OCI-LY7 (cell line): ENCODE measurements at regions of chr10 and their contacts with region 1.

Region 1: DNA sequence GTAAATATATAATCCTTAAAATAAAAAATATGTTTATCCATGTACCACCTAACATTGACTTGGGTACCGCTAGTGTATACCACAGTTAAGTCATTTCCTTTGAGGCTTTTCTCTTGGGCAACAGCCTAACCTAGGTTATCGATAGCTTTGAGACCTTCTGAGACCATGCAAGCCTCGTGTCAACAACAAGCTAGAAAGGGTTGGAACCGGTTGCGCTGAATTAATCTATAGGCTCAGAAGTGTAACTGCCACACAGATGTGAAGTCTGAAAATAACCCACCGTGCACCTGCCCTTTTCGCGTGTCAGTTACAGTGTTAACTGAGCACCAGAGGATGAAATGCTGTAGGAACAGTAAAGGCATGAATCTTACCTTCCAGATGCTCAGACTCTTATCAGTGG is 59.8 kb downstream of the ARID5B start:
- DNase-seq: peak; percentile 99
- H3K4me3 ChIP-seq: no peak overlapping the region
- H3K27ac ChIP-seq: peak overlapping the region; percentile 97
- H3K4me1 ChIP-seq: peaks cover 98% of the 10 kb centered on the region
- CTCF ChIP-seq: no peak

Region 2: GRCh38 chr10:61896854-61897661 is 64.2 kb before region 1 on chr10:
- CTCF ChIA-PET with region 1: interaction called, 4 read pairs
- POLR2A ChIA-PET with region 1: interaction called, 284 read pairs
- intact Hi-C with region 1: loop called (anchors 1 kb)
- DNase-seq: peak; percentile 95
- H3K4me3 ChIP-seq: peak overlapping the region; percentile 93
- H3K27ac ChIP-seq: peak overlapping the region; percentile 96
- H3K4me1 ChIP-seq: peaks cover 36% of the 10 kb centered on the region
- CTCF ChIP-seq: peak; percentile 83

Region 3: GRCh38 chr10:61943674-61944410 is 17.4 kb before region 1 on chr10:
- CTCF ChIA-PET with region 1: interaction called, 3 read pairs
- POLR2A ChIA-PET with region 1: interaction called, 10 read pairs
- intact Hi-C with region 1: loop called (anchors 2 kb)
- DNase-seq: peak; percentile 68
- H3K4me3 ChIP-seq: peak overlapping the region; percentile 30
- H3K27ac ChIP-seq: peak overlapping the region; percentile 88
- H3K4me1 ChIP-seq: peaks cover 67% of the 10 kb centered on the region
- CTCF ChIP-seq: peak; percentile 69

Region 4: DNA sequence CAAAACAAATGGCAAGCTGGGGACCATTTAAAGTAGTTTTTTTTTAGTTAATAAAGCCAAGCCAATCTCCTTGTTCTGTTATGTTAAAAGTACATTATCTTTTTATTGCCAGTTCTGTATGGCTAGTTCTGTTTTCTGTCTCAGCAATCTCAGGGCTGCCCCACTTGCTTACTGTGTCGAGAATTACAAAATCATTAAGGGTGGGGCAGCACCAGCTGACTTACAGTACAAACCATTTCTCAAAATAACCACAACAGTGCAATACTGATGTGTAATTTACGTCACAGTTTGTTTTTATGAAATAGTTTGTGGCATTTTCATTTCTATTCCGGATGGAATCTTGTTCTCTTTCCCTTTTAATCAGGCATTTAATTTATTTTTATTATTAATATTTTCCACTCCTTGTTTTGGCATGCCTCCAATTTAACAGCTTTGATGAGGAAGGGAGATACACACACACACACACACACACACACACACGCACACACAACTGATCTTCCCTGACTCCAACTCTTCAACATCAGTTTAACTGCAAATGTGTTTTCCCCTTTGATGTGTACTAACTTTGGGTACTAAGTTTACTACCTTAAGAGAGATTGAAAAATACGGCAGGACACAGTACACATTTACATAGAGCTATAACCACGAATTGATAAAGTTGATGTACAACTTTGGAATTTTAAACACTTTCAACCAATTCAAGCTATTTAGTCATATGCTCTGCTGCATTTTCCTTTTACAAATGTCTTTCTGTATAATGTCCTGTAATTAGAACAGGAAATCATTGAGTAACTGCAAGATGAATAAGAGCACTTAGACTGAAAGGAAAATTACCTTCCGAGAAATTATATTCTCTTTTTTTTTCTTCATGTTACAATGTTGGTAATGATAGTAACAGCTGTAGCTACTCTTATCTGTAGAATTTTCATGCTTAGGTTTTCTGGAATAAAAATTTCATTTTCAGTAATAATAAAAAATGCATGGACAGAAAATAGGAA is 31.7 kb after region 1 on chr10:
- CTCF ChIA-PET with region 1: interaction called, 7 read pairs
- POLR2A ChIA-PET with region 1: interaction called, 222 read pairs
- intact Hi-C with region 1: loop called (anchors 1 kb)
- DNase-seq: peak; percentile 67
- H3K4me3 ChIP-seq: peak overlapping the region; percentile 58
- H3K27ac ChIP-seq: peak overlapping the region; percentile 80
- H3K4me1 ChIP-seq: peaks cover 100% of the 10 kb centered on the region
- CTCF ChIP-seq: no peak

Region 5: GRCh38 chr10:62045765-62046521 is 84.7 kb after region 1 on chr10:
- CTCF ChIA-PET with region 1: interaction called, 3 read pairs
- POLR2A ChIA-PET with region 1: interaction called, 82 read pairs
- intact Hi-C with region 1: loop called (anchors 1 kb)
- DNase-seq: peak; percentile 22
- H3K4me3 ChIP-seq: peak overlapping the region; percentile 27
- H3K27ac ChIP-seq: peak overlapping the region; percentile 76
- H3K4me1 ChIP-seq: peaks cover 98% of the 10 kb centered on the region
- CTCF ChIP-seq: no peak

Region 6: DNA sequence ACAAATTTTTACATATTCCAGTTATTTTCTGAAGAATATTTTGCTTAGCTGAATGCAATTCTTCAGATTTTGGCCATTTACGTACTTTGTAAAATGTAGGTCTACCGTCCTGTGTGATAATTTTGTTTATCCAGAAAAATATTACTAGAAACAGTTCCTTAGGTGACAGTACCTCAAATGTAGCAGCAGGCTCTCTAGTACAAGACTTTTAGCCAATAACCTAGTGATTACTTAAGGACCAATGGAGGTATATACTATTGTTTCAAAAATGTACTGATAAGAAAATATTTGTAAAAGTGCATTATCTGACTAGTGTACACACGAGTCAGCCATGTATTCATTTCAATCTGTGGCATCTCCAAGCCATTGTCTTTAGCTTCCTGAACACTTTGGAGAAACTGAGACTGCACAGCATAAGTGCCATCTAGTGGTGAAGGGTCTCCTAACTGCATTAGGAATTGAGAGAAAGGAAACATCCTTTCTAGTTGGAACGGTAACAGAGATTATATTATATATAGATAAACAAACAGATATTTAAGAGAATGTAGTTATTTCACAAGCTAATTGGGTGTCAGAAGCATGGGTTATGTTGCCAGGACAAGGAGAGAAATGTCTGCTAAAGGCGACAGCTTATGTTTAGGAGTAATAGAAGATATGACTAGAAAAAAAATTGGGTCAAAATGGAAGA is 283.6 kb after region 1 on chr10:
- CTCF ChIA-PET with region 1: no interaction called
- POLR2A ChIA-PET with region 1: interaction called, 7 read pairs
- intact Hi-C with region 1: loop called (anchors 2 kb)
- DNase-seq: peak; percentile 86
- H3K4me3 ChIP-seq: no peak overlapping the region
- H3K27ac ChIP-seq: peak overlapping the region; percentile 67
- H3K4me1 ChIP-seq: peaks cover 26% of the 10 kb centered on the region
- CTCF ChIP-seq: peak; percentile 99